IMR-90 (cell line): ENCODE measurements at regions of chr21 and their contacts with region 1.

Region 1: DNA sequence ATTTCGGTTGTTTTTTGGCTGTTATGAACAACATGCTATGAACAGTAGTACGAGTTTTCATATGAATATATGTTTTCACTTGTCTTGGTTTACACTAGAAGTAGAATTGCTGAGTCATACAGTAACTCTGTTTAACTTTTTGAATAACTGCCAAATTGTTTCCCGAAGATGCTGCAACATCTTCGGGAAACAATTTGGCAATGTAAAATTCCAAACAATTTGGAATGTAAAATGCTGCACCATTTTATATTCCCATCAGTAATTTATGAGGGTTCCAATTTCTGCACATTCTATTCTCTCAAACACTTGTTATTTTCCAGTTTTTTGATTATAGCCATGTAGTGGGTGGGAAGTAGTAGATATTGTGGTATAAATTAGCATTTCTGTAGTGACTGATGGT is 11.6 kb downstream of the PCBP3 start:
- DNase-seq: peak; percentile 78
- ATAC-seq: peak; percentile 72
- H3K4me3 ChIP-seq: no peak overlapping the region
- H3K27ac ChIP-seq: peak overlapping the region; percentile 59; the same call in 1 of the 2 replicates
- H3K4me1 ChIP-seq: no peaks in the 10 kb centered on the region
- H3K27me3 ChIP-seq: no peaks in the 10 kb centered on the region; the same call in 1 of the 2 replicates
- CTCF ChIP-seq: no peak
- POLR2A ChIP-seq: no peak
- RAD21 ChIP-seq: no peak

Region 2: DNA sequence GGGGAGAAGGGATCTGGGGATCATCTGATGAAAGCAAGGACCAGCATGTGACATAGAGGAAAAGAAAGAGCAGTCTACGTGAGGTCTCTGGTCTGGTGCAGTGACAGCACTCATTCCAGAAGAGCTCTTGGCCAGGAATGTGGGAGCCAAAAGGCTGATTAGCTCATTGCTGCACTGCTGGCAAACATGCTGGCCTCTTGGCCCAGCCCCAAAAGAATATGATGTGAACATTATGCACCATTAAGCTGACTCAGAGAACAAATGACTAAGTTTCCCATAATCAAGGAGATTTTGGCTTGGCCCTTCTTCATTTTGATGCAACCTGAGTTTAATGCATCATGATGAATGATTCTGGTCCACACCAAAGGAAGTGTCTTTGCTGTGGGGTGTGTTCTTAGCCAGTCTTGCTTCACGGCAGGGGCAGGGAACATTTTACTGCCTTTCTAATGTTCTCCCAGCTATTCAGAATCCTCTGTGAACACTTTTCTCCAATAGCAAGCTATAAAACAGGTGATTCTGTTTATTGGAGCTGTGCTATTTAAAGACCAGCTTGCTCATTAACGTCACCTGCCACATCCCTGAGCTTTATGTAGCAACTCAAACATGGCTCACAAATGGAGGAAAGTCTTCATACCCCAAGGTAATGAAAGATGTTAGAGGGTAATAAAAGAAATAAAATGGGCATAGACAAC is 43.5 kb after region 1 on chr21:
- CTCF ChIA-PET with region 1: no interaction called
- POLR2A ChIA-PET with region 1: no interaction called
- dilution Hi-C with region 1: no loop called
- in situ Hi-C with region 1: no loop called
- intact Hi-C with region 1: loop called (anchors 5 kb)
- DNase-seq: peak; percentile 96
- ATAC-seq: peak; percentile 94
- H3K4me3 ChIP-seq: no peak overlapping the region
- H3K27ac ChIP-seq: no peak overlapping the region
- H3K4me1 ChIP-seq: peaks cover 3% of the 10 kb centered on the region; the same call in 1 of the 2 replicates
- H3K27me3 ChIP-seq: no peaks in the 10 kb centered on the region
- CTCF ChIP-seq: no peak
- POLR2A ChIP-seq: no peak
- RAD21 ChIP-seq: peak; percentile 8; the same call in 1 of the 2 replicates